CD14-positive monocyte (primary cell): ENCODE measurements at regions of chr21 and their contacts with region 1.

Region 1: DNA sequence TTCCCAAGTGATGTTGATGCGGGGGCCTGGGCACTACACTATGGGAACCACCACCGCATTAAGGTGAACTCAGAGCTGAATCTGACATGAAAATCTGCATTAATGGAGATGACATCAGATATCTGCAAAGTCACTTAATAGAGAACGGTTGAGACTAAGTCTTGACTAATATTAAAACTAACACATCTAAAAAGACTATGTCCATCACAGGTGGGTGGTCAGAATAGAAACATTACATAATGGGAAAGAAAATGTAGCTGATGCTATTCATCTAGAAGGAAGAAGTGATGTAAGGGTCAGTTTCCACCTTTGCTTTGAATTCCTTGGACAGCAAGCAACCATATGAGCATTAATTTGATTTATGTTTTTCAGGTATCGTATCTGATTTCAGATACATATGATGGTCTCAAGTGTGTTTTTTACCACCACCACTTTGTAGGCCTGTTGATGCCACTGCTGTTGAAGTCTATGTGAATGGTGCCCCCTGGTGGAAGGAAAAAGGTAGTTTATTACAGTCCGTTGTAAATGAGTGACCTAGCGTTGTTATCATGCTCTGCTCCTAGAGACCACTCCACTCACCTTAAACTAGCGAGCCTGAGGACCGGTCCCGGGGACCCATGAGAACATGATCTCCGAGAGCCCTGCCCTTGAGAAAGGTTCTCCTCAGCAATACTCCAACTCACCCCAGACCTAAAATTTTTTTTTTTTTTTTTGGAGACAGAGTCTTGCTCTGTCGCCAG is 73.5 kb downstream of the BACH1 start:
- DNase-seq: peak; percentile 74 to 81 (median 76)
- H3K4me3 ChIP-seq: no peak overlapping the region
- H3K4me3 Mint-ChIP-seq: no peak overlapping the region
- H3K27ac ChIP-seq: peak overlapping the region in 1 of 2 donors; percentile 54
- H3K27ac Mint-ChIP-seq: peak overlapping the region in 5 of 7 donors; percentile 37 to 87 (median 72)
- H3K4me1 ChIP-seq: peaks cover 5 to 7% of the 10 kb centered on the region in 2 donors
- H3K4me1 Mint-ChIP-seq: peaks cover 14% of the 10 kb centered on the region
- H3K27me3 ChIP-seq: no peaks in the 10 kb centered on the region
- H3K27me3 Mint-ChIP-seq: peaks cover 0 to 2% (median 0%) of the 10 kb centered on the region in 3 donors
- CTCF ChIP-seq: peak; percentile 81

Region 2: DNA sequence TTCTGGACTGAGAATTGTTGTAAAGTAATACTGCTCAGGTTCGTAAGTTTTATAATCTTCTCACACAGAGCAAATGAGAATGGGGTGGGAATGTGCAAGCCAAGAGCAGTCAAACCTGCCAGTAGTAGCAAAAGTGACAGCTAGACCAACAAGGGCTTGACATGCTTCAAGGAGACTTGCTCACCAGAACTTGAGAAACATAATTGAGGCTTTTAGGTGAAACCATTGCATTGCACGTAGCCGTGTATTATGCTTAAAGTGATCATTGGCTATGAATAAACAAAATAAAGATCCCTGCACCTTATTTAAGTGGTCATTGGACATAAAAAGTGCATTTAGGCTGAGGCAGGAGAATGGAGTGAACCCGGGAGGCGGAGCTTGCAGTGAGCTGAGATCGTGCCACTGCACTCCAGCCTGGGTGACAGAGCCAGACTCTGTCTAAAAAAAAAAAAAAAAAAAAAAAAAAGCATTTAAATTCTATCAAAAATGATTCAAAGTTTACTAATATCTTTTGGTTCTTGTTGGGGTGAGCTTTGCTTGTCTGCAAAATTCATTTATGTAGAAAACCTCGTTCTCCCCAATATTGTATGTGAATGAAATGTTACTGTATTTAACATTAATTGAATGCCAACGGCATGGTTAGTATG is 287.0 kb before region 1 on chr21:
- intact Hi-C with region 1: loop called (anchors 2 to 5 kb)
- DNase-seq: no peak
- H3K4me3 ChIP-seq: no peak overlapping the region
- H3K4me3 Mint-ChIP-seq: no peak overlapping the region
- H3K27ac ChIP-seq: no peak overlapping the region
- H3K27ac Mint-ChIP-seq: no peak overlapping the region
- H3K4me1 ChIP-seq: peaks cover 37 to 38% of the 10 kb centered on the region in 2 donors
- H3K4me1 Mint-ChIP-seq: peaks cover 37% of the 10 kb centered on the region
- H3K27me3 ChIP-seq: no peaks in the 10 kb centered on the region
- H3K27me3 Mint-ChIP-seq: peaks cover 0 to 4% (median 0%) of the 10 kb centered on the region in 3 donors
- CTCF ChIP-seq: no peak

Region 3: DNA sequence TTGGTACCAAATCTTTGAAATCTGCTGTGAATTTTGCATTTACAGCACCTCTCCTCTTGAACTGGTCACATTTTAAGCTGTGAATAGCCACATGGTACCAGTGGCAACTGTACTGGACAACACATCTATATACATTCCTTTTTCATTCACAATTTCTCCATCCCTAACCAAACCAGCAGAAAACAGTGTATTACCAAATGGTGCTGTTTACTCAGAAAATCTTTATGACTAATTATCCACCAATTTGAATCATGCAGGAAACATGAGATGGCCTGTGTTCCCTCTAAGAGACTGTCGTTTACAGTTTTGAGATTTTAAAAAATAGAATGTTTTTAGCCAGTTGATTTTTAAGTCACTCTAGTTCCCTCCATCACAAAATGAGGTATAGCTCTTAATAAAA is 281.2 kb before region 1 on chr21:
- intact Hi-C with region 1: loop called (anchors 2 to 5 kb)
- DNase-seq: peak; percentile 48 to 76 (median 69)
- H3K4me3 ChIP-seq: no peak overlapping the region
- H3K4me3 Mint-ChIP-seq: no peak overlapping the region
- H3K27ac ChIP-seq: peak overlapping the region in 1 of 2 donors; percentile 79
- H3K27ac Mint-ChIP-seq: peak overlapping the region; percentile 79 to 97 (median 92)
- H3K4me1 ChIP-seq: peaks cover 26 to 38% of the 10 kb centered on the region in 2 donors
- H3K4me1 Mint-ChIP-seq: peaks cover 48% of the 10 kb centered on the region
- H3K27me3 ChIP-seq: no peaks in the 10 kb centered on the region
- H3K27me3 Mint-ChIP-seq: peaks cover 0 to 4% (median 2%) of the 10 kb centered on the region in 3 donors
- CTCF ChIP-seq: no peak

Region 4: GRCh38 chr21:29351691-29352090 is 20.5 kb before region 1 on chr21:
- intact Hi-C with region 1: no loop called
- DNase-seq: no peak
- H3K4me3 ChIP-seq: no peak overlapping the region
- H3K4me3 Mint-ChIP-seq: no peak overlapping the region
- H3K27ac ChIP-seq: no peak overlapping the region
- H3K27ac Mint-ChIP-seq: no peak overlapping the region
- H3K4me1 ChIP-seq: peaks cover 34 to 39% of the 10 kb centered on the region in 2 donors
- H3K4me1 Mint-ChIP-seq: peaks cover 33% of the 10 kb centered on the region
- H3K27me3 ChIP-seq: no peaks in the 10 kb centered on the region
- H3K27me3 Mint-ChIP-seq: peaks cover 0 to 6% (median 0%) of the 10 kb centered on the region in 3 donors
- CTCF ChIP-seq: no peak